ENCODE measurements at regions of chr6 and their contacts with region 1.

Region 1: DNA sequence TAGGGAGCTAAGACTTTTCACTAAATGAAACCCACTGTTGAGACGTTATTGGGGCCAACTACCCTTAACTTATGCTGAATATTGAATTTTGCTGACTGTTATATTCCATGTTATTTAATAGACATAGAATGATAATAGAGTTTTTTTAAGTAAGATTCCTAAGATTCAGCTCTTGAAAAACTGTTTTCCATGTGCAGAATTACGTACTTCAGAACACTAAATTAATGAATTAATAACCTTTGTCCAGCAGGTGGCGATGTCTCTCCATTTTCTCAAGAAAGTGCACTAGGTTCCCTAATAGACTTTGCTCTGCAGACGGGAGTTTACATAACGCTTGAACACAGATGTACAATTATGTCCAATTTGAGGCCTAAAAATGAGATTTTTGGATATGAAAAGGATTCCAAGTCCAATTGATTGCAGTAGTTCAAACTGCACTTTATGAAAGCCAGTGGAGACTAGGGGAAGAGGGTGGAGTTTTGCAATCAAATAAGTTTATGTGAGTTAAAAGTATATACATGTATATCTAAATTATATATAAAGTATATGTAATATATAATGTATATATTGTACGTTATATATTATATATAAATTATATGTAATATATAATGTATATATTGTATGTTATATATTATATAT is 282.1 kb downstream of the UST start:
- DNase-seq: peak; percentile 78
- H3K4me3 ChIP-seq: no peak overlapping the region
- H3K27ac ChIP-seq: no peak overlapping the region
- H3K4me1 ChIP-seq: peaks cover 0 to 30% (median 26%) of the 10 kb centered on the region in 4 donors
- H3K27me3 ChIP-seq: no peaks in the 10 kb centered on the region
- CTCF ChIP-seq: peak; percentile 67 to 78 (median 74)
- EP300 ChIP-seq: no peak
- POLR2A ChIP-seq: no peak

Region 2: DNA sequence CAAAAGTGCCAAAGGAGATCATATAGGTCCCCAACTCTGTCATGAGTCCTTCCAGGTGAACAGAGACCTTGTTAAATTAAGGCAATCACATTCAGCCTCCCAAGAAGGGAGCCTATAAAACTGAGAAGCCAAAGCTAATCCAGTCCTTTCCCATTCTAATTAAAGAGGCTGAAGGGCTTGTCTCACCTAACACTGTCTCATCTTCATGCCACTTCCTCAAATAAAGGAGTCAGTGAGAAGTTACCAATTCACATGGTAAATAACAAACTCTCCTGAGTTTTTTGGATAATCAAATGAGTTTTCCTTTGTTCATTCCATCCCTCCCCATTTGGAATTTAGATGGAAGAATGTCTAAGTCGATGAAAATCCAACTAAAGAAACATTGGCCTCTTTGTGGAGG is 39.3 kb before region 1 on chr6:
- intact Hi-C with region 1: no loop called
- DNase-seq: peak; percentile 3
- H3K4me3 ChIP-seq: no peak overlapping the region
- H3K27ac ChIP-seq: no peak overlapping the region
- H3K4me1 ChIP-seq: peaks cover 0 to 11% (median 2%) of the 10 kb centered on the region in 4 donors
- H3K27me3 ChIP-seq: no peaks in the 10 kb centered on the region
- CTCF ChIP-seq: no peak
- EP300 ChIP-seq: no peak
- POLR2A ChIP-seq: no peak

Region 3: DNA sequence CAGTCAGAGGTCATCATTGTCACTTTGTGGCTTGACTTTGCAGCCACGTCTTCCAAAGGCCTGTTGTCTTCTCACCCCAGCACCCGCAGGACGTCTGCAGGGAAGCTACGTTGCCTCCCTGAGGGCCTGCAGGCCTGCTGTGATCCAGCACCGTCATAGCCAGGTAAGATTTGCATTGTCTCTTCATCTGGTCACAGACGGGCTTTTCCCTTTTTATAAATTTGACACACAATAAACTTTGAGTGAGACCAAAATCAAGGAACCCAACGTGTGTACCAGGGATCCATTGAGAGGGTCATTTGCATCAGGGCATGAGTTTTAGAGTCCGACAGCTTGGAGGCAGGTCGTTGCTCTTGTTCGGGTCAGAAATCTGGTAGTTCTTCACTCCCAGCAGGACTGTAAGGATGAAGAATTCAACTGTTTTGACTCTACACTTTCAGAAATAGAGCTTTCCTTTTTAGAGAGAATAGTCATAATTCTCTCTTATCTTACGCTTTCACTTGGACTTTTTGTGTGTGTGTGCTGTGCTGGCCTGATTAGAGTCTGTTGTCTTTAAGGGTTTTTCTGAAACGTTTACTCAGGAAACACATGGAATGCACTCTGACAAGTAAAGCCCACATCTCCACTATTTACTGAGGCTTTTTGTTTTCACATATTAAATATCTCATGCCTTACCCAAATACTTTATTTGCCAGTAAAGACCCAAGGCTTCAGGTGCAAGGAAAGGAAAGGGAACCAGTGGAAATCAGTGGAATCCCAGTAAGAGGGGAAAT is 111.4 kb after region 1 on chr6:
- intact Hi-C with region 1: no loop called
- DNase-seq: no peak
- H3K4me3 ChIP-seq: no peak overlapping the region
- H3K27ac ChIP-seq: no peak overlapping the region
- H3K4me1 ChIP-seq: no peaks in the 10 kb centered on the region
- H3K27me3 ChIP-seq: no peaks in the 10 kb centered on the region
- CTCF ChIP-seq: no peak
- EP300 ChIP-seq: no peak
- POLR2A ChIP-seq: no peak

Region 4: GRCh38 chr6:149431905-149432775 is 403.3 kb after region 1 on chr6:
- intact Hi-C with region 1: loop called (anchors 5 kb)
- DNase-seq: peak; percentile 97
- H3K4me3 ChIP-seq: peak overlapping the region in 1 of 4 donors; percentile 18
- H3K27ac ChIP-seq: no peak overlapping the region
- H3K4me1 ChIP-seq: peaks cover 3 to 18% (median 9%) of the 10 kb centered on the region in 4 donors
- H3K27me3 ChIP-seq: no peaks in the 10 kb centered on the region
- CTCF ChIP-seq: peak; percentile 94 to 95 (median 94)
- EP300 ChIP-seq: no peak
- POLR2A ChIP-seq: no peak